Right cardiac atrium (tissue), 5 donors: ENCODE measurements at regions of chr3 and their contacts with region 1.

Region 1: DNA sequence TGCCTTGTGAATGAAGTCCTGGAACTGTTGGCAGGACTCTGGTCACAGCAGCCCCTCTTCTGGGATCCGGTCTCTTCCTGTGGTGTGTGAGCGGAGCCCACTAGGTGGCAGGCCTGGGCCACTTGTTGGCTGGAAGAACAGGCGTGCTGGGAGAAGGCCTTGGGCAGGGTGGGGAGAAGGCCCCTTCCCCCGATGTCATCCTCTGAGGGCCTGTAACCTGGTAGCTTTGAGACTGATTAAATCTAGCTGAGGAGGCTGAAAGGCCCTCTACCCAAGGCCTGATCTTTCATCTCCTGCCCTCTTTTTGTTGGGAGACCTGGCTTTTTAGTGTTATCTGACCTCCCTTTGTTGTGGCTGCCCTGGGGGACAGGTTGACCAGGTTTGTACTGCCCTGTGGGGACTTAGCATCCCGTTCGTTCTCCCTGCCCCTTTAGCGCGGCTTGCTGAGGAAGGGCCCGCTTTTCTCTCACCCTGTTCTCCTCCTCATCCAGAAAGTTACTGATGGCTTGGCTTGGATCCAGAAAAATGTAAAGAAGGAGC is 48.3 kb downstream of the CHCHD6 start:
- DNase-seq: peak; percentile 85 to 94 (median 93)
- ATAC-seq: peak; percentile 88 to 92
- H3K4me3 ChIP-seq: no peak overlapping the region
- H3K27ac ChIP-seq: no peak overlapping the region
- H3K4me1 ChIP-seq: peaks cover 6% of the 10 kb centered on the region
- H3K27me3 ChIP-seq: no peaks in the 10 kb centered on the region

Region 2: DNA sequence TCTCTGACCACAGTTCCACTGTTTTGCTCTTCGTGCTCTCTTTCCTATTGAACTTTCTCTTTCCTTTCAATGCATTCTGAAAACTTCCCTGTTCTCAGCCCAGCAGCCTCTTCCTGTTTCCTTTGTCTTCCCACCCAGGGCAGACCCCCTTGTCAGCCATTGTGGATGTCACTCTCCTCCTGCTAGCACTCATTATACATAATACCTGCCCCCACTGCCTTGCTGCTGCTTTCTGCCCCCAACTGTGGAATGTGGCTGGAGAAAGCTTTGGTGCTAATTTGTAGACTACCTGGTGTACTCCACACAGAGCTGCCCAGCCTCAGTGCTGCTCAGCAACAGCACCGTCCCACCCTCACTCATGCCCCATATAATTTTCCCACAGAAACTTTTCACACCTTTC is 31.9 kb after region 1 on chr3:
- intact Hi-C with region 1: no loop called
- DNase-seq: no peak
- ATAC-seq: no peak
- H3K4me3 ChIP-seq: no peak overlapping the region
- H3K27ac ChIP-seq: no peak overlapping the region
- H3K4me1 ChIP-seq: peaks cover 5% of the 10 kb centered on the region
- H3K27me3 ChIP-seq: no peaks in the 10 kb centered on the region

Region 3: DNA sequence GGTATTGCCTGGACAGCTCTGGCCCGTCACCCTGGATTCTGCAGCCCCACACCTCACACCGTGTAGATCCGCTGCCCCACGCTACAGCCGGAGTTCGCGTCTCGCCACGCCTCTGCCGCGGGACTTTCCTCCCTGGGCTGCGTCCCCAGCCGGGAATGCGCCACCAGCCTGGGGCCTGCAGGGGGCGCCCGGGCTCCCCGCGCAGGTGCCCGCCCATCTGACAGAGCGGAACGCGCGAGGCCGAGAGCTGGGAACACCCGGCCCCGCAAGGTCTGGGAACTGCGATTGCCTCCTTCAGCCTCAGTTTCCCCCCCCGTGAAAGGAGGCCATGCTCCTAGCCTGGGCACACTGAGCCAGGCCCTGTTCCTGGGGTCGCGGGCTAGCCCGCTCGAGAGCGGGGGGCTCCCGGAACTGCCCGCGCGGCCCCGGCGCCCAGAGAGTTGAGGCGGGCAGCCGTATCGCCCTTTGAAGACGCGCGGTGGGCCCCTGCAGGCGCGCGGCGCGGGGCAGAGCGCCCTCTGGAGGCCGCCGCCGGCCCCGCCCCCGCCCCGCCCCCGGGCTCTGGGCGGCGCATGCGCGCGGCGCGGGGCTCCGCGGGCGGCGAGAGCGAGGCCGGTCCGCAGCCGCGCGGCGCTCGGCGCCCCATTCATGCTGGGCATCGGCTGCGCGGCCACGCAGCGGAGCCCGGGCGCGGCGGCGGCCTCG is 230.2 kb after region 1 on chr3 and contains the start of gene PLXNA1:
- intact Hi-C with region 1: loop called (anchors 5 kb)
- DNase-seq: peak; percentile 84 to 95 (median 93)
- ATAC-seq: peak; percentile 86
- H3K4me3 ChIP-seq: peak within 1 kb of the TSS; percentile 95
- H3K27ac ChIP-seq: peak within 1 kb of the TSS; percentile 69
- H3K4me1 ChIP-seq: peaks cover 3% of the 10 kb centered on the region
- H3K27me3 ChIP-seq: no peaks in the 10 kb centered on the region
- total RNA-seq, gene PLXNA1: 12.8 to 17.8 (median 15.2) TPM

Region 4: DNA sequence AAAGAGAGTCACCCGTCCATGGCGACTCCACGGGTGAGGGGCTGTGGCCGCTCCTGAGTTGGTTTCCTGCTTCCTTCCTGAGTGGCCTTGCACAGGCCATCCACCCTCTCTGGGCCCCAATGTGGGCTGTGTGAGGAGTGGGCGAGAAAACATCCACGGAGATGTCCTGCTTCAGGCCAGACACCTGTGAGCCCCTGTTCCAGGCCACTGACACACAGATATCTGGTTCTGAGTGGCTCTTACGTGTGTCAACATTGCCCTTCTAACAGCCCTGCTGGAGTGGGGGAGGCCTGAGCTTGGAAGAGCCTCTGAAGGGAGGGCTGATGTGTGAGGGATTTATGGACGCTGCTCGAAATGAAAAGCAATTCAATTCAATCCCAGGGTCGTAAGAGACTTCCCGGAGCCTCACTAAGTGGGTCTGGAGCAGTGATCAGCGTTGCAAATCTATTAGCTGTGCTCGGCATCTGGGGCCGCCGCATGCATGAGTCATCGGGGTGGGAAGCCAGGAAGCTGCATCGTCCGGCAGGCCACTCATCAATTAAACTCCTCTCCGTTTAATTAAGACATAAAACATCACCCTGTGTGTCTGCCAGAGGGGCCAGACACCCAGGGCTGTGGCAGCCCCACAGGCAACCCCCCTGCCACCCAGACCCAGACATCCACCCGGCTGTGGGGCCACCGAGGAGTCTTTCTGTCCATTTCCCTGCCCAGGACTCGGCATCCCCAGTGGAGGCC is 420.6 kb after region 1 on chr3:
- intact Hi-C with region 1: loop called in 1 of 4 experiments (anchors 5 kb)
- DNase-seq: no peak
- ATAC-seq: no peak
- H3K4me3 ChIP-seq: no peak overlapping the region
- H3K27ac ChIP-seq: no peak overlapping the region
- H3K4me1 ChIP-seq: no peaks in the 10 kb centered on the region
- H3K27me3 ChIP-seq: no peaks in the 10 kb centered on the region

Region 5: DNA sequence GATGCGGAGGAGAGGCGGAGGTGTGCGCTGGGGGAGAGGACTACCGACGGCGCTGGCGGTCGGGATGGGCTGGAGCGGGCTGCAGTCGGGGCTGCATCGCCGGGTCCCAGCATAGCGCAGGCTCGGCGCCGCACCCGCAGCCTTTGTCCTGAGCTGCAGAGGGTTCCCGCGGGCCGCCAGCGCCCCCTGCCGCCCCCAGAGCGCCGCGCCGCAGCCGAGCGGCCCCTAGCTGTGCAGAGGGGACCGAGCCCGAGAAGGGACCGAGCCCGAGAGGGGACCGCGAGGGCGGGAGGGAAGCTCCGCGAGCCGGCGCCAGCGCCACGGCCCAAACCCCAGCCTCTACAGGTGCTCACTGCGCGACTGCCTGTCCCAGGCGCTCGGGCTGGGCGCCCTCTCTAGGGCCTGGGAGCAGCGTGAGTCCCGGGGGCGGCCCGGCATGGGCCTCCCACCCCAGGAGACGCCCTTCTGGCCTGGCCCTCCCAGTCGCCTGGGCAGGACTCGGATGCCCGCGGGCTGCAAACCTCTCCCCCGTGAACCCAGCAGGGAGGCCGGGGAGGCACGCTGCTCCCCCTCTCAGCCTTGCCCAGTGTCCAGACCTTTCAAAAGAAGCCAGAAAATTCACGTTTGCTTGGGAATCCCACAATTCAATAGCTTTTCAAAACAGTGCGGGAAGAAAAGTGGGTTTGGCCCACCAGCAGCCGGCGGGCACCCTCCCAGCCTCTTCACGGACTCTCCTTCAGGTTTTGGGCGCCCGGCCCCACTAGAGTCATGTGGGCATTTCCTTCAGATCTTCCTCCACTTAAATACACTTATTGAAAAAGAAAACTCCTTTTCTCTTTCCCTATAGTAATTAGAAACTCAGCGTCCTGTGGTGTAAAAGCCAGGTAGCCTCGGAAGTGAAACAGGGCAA is 703.4 kb after region 1 on chr3:
- intact Hi-C with region 1: loop called in 1 of 4 experiments (anchors 10 kb)
- DNase-seq: peak; percentile 75 to 89 (median 89)
- ATAC-seq: peak; percentile 89 to 94
- H3K4me3 ChIP-seq: peak overlapping the region; percentile 19
- H3K27ac ChIP-seq: no peak overlapping the region
- H3K4me1 ChIP-seq: no peaks in the 10 kb centered on the region
- H3K27me3 ChIP-seq: no peaks in the 10 kb centered on the region

Region 6: DNA sequence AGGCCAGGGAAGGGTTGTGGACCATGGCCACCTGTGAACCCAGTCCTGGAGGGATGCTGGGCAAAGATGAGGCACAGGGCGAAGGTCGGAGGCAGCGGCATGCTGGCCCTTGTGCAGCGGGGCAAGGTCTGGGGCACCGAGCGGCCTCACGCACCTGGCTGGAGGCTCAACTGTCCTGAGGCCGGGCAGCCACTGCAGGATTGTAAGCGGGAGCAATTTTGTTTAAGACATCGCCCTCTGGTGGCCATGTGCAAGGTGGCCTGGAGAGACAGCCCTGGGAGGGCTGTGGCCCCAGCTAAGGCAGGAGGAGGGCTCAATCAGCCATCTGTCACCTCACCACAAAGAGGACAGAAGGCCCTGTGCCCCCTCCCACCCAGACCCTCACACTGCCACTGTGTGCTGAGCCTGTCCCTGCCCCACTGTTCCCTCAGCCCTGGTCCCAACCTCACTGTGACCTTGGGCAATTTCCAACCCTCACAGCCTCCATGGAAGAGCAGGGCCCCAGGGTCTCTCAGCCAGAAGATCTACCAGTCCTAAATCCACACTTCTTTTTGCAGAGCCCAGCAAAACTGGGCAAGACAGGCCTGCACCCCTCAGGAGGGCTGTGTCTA is 791.9 kb after region 1 on chr3:
- intact Hi-C with region 1: loop called in 1 of 4 experiments (anchors 10 kb)
- DNase-seq: peak; percentile 76 to 91 (median 84)
- ATAC-seq: peak; percentile 39 to 54
- H3K4me3 ChIP-seq: no peak overlapping the region
- H3K27ac ChIP-seq: no peak overlapping the region
- H3K4me1 ChIP-seq: no peaks in the 10 kb centered on the region
- H3K27me3 ChIP-seq: no peaks in the 10 kb centered on the region